Activated B cell treated with CpG ODN at 0.5 μM for 24 hours (primary cell): ENCODE measurements at regions of chr12 and their contacts with region 1.

Region 1: GRCh38 chr12:54398995-54399793 is 14.7 kb upstream of the ZNF385A start:
- DNase-seq: peak; percentile 79
- ATAC-seq: peak; percentile 99
- H3K4me3 Mint-ChIP-seq: no peak overlapping the region
- H3K27ac Mint-ChIP-seq: no peak overlapping the region
- H3K4me1 Mint-ChIP-seq: peaks cover 2% of the 10 kb centered on the region
- H3K27me3 Mint-ChIP-seq: no peaks in the 10 kb centered on the region
- CTCF ChIP-seq: peak; percentile 59

Region 2: GRCh38 chr12:54005853-54006686 is 393.1 kb before region 1 on chr12:
- CTCF ChIA-PET with region 1: no interaction called
- POLR2A ChIA-PET with region 1: no interaction called
- intact Hi-C with region 1: loop called (anchors 10 kb)
- DNase-seq: peak; percentile 83
- ATAC-seq: peak; percentile 89
- H3K4me3 Mint-ChIP-seq: peak overlapping the region; percentile 78
- H3K27ac Mint-ChIP-seq: no peak overlapping the region
- H3K4me1 Mint-ChIP-seq: peaks cover 23% of the 10 kb centered on the region
- H3K27me3 Mint-ChIP-seq: peaks cover 77% of the 10 kb centered on the region
- CTCF ChIP-seq: peak; percentile 67

Region 3: DNA sequence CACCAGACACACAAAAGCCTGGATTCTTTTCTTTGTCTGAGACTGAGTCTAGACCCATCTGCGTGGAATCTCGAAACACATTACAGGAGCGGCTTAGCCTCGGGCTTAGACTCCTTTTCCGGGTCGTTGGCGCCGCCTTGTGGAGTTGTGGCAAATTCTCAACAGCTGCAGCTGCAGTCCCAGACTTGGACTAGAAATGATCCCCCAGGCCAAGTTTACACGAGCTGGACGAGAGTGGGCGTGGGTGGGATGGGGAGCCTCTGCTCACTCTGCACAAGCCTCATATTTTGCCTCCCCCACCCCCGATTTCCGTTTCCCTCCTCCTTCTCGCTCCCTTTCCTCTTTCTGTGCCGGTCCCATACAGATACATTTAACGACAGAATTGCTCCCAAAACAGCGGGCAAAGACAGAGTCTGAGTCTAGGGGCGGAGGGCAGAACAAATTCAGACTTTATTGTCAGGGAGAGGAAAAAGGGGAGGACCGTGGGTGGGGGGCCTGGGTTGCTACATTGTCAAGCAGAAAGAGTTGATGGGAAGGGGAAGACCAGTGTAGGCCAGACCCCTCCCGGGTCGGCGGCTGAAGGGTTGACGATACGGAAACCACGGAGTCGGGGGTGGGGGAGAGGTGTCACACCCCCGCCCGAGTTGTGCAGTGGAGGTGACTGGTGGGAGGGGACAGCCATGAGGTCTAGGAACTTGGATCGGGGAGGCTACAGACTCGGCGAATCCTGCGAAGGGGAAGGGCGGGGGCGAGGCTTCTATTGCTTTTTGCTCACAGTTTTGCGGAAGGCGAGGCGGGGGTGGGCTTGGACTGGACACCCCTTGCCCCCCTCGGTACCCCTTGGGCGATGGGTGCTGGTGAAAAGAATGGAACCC is 30.2 kb before region 1 on chr12:
- CTCF ChIA-PET with region 1: interaction called, 4 read pairs
- POLR2A ChIA-PET with region 1: no interaction called
- intact Hi-C with region 1: loop called (anchors 1 kb)
- DNase-seq: peak; percentile 78
- ATAC-seq: peak; percentile 95
- H3K4me3 Mint-ChIP-seq: peak overlapping the region; percentile 55
- H3K27ac Mint-ChIP-seq: no peak overlapping the region
- H3K4me1 Mint-ChIP-seq: peaks cover 22% of the 10 kb centered on the region
- H3K27me3 Mint-ChIP-seq: no peaks in the 10 kb centered on the region
- CTCF ChIP-seq: peak; percentile 60

Region 4: DNA sequence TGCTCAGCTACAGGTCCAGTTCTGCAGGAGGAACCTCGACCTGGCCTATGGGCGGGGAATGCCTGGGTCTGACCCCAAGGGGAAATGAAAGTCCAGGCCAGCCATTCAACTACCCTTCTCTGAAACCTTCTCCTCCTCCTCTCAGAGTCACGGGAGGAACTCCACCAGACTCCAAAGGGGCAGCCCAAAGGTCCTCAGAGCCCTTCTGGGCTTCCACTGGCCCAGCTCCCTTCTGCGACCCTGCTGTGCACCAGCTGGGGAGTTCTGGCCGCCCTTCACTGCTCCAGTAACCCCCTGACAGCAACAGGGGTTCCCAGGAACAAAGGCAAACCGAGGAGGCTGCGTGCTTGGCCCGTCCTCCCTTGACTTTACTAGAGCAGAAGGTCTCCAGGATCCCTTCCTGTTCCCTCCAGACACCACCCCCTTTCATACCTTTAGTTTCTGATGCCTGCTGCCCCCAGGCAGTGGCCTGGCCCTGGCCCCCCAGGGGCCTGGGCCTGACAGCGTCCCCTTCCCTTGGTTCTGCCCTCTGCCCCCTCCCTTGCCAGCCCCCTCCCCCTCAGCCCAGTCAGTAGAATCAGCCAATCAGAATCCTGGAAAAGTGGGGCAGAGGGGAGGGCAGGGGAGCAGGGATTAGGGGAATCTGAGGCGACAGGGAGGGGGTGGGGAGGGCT is 13.8 kb before region 1 on chr12:
- CTCF ChIA-PET with region 1: interaction called, 30 read pairs
- POLR2A ChIA-PET with region 1: no interaction called
- intact Hi-C with region 1: loop called (anchors 1 kb)
- DNase-seq: peak; percentile 35
- ATAC-seq: peak; percentile 58
- H3K4me3 Mint-ChIP-seq: peak overlapping the region; percentile 66
- H3K27ac Mint-ChIP-seq: peak overlapping the region; percentile 79
- H3K4me1 Mint-ChIP-seq: peaks cover 77% of the 10 kb centered on the region
- H3K27me3 Mint-ChIP-seq: no peaks in the 10 kb centered on the region
- CTCF ChIP-seq: no peak

Region 5: GRCh38 chr12:54431911-54432814 is 33.0 kb after region 1 on chr12:
- CTCF ChIA-PET with region 1: interaction called, 361 read pairs
- POLR2A ChIA-PET with region 1: no interaction called
- intact Hi-C with region 1: no loop called
- DNase-seq: no peak
- ATAC-seq: no peak
- H3K4me3 Mint-ChIP-seq: no peak overlapping the region
- H3K27ac Mint-ChIP-seq: no peak overlapping the region
- H3K4me1 Mint-ChIP-seq: peaks cover 9% of the 10 kb centered on the region
- H3K27me3 Mint-ChIP-seq: peaks cover 14% of the 10 kb centered on the region
- CTCF ChIP-seq: no peak

Region 6: DNA sequence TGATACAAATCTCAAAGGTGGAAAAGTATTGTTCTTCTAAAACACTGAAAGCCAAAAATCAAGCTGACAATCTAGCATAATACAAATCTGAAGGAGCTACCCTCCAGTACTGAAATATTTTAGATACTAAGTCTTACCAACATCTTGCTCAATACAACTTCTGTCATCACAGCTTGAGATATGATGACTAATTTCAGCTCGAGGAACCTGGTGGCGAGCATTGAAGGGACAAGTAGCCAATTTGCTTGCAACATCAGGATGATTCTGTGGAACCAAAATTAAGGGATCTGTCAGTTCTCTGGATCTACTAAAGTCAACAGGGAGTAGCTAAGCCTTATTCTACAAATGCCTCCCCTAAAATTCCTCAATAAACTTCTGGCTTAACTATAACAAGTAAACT is 63.8 kb after region 1 on chr12:
- CTCF ChIA-PET with region 1: interaction called, 10 read pairs
- POLR2A ChIA-PET with region 1: no interaction called
- intact Hi-C with region 1: no loop called
- DNase-seq: no peak
- ATAC-seq: no peak
- H3K4me3 Mint-ChIP-seq: no peak overlapping the region
- H3K27ac Mint-ChIP-seq: no peak overlapping the region
- H3K4me1 Mint-ChIP-seq: no peaks in the 10 kb centered on the region
- H3K27me3 Mint-ChIP-seq: peaks cover 9% of the 10 kb centered on the region
- CTCF ChIP-seq: no peak